Activated CD8-positive, alpha-beta T cell treated with anti-CD3 and anti-CD28 coated beads for 36 hours (primary cell): ENCODE measurements at regions of chr3 and their contacts with region 1.

Region 1: DNA sequence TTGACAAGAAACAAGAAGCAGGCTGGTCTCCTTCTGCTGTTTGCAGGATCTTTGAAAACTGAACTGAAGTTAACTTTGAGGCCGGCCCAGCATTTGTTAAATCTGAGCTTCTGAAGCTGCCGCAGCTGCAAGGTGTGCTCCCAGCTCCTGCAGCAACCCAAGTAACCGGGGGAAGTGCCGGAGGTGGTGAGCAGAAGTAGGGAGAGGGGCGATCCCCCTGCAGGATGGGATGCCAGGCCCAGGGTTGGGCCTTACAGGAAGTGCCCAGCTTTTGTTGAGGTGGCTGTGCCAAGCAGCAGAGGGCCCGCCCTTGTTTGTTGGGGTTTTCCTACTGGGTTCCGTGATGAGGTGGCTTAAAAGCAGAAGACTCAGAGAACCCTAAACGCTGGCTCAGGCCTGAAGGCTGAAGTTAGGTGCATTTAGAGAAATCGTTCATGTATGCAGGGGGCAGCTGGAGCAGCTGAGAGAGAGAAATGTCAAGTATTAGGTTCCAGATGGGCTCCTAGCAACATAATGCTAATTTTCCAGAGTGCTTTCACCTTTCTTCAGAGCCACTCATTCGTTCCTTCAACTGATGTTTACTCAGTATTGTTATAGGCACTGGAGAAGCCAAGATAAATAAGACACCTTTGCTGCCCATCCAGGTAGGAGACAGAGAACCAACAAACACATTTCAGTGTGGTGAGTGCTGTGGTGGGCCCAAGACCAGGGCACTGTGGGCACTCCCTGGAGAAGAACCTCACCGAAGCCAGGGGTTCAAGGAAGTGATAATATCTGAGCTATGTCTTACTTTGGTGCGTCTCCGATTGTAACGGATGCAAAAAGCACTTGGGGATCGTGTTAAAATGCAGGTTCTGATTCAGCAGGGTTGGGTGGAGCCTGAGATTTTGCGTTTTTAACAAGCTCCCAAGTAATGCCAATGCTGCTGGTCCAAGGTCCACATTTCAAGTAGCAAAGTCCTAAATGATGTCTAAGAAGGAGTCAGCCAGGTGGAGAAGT is 42.2 kb upstream of the PLCL2 start:
- DNase-seq: peak; percentile 88
- ATAC-seq: peak; percentile 93
- H3K4me3 Mint-ChIP-seq: peak overlapping the region; percentile 71
- H3K27ac Mint-ChIP-seq: peak overlapping the region; percentile 94
- H3K4me1 Mint-ChIP-seq: peaks cover 71% of the 10 kb centered on the region
- H3K27me3 Mint-ChIP-seq: no peaks in the 10 kb centered on the region
- CTCF ChIP-seq: no peak

Region 2: DNA sequence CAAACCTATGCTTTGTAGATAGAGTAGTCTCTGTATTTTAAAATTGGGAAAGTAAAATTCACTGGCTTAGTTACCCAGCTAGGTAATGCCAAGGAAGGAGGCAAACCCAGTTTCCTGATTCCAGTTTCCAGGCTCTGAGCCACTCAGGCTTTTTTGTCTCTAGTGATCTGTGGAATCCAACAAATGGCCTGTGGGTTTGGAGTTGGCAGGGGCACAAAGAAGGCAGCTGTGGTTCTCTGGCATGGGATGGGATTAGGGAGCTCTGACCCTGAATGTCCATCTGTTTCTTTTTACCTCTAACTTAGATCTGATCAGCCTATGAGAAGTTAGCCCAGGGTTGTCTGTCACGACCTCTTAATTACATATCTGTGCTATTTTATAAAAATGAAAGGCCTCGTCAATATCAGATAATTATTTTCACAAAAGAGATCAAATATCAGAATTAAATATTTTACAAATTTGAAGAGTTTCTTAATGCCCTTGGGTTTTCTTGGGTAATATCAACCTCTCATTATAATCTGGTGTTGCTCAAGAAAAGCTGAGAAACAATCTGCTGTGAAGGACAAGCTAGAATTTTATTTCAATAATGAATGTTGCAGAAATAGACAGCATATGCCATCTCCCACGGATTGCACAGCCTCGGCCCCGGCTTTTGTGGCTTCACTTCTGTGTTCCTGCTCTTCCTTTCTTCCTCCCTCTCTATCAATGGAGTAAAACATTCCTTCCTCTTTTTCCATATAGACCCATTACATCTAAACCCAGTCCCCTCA is 173.6 kb before region 1 on chr3:
- CTCF ChIA-PET with region 1: no interaction called
- POLR2A ChIA-PET with region 1: no interaction called
- intact Hi-C with region 1: no loop called
- DNase-seq: no peak
- ATAC-seq: no peak
- H3K4me3 Mint-ChIP-seq: no peak overlapping the region
- H3K27ac Mint-ChIP-seq: no peak overlapping the region
- H3K4me1 Mint-ChIP-seq: no peaks in the 10 kb centered on the region
- H3K27me3 Mint-ChIP-seq: peaks cover 8% of the 10 kb centered on the region
- CTCF ChIP-seq: no peak

Region 3: GRCh38 chr3:16828815-16829214 is 13.8 kb before region 1 on chr3:
- CTCF ChIA-PET with region 1: interaction called, 17 read pairs
- POLR2A ChIA-PET with region 1: interaction called, 5 read pairs
- intact Hi-C with region 1: no loop called
- DNase-seq: peak; percentile 72
- ATAC-seq: peak; percentile 70
- H3K4me3 Mint-ChIP-seq: no peak overlapping the region
- H3K27ac Mint-ChIP-seq: no peak overlapping the region
- H3K4me1 Mint-ChIP-seq: peaks cover 20% of the 10 kb centered on the region
- H3K27me3 Mint-ChIP-seq: no peaks in the 10 kb centered on the region
- CTCF ChIP-seq: peak; percentile 28

Region 4: GRCh38 chr3:17258823-17259436 is 416.4 kb after region 1 on chr3:
- CTCF ChIA-PET with region 1: no interaction called
- POLR2A ChIA-PET with region 1: no interaction called
- intact Hi-C with region 1: no loop called
- DNase-seq: peak; percentile 21
- ATAC-seq: no peak
- H3K4me3 Mint-ChIP-seq: no peak overlapping the region
- H3K27ac Mint-ChIP-seq: no peak overlapping the region
- H3K4me1 Mint-ChIP-seq: no peaks in the 10 kb centered on the region
- H3K27me3 Mint-ChIP-seq: no peaks in the 10 kb centered on the region
- CTCF ChIP-seq: peak; percentile 73